ENCODE measurements at regions of chr12 and their contacts with region 1.

Region 1: DNA sequence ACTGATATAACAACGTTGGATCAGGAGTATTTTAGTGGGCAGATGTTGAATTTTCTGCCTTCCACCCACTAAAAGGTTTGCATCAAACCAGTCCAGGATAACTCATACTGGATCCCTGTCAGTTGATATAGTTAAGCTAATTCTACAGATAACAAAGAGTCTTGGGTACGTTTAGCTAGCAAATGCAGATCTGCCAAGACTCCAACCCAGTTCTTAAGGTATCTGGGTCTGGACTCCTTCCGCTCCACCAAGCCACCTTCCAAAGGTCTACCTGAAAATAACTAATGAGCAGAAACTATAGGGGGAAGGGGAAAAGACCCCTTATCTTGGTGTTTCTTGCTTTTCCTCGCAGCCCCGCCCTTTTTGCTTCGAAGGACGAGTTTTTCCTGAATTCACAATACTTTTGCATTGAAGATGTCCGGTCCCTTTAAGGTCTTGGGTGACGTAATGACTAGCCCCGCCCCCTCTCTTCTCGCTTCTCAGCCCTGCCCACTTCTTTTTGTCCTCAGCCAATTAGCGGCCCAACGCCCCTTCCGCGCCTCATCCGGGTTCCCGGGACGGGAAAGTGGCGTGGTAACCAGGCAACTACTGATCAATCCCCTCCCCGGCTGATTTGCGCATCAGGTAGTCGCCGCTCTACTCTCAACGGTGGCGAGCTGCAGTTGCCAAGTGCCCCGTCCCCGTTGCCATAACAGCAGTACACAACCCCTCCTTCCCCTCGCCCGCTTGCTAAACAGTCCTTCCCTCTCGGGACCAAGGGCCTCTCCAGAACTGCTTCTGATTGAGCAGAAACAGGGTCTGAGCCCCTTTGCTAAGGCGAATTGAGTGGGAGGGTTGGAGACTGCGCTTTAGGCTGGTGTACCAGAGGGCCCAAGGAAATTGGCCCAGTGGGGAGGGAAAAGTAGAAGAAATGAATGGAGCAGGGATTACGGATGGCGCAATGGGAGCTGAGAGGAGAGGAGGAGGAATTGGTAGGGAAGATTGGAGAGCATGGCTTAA is at the start of gene LRRC23:
- DNase-seq: peak; percentile 96 to 98 (median 97)
- H3K4me3 ChIP-seq: peak within 1 kb of the TSS; percentile 54 to 87 (median 73)
- H3K27ac ChIP-seq: peak within 1 kb of the TSS; percentile 93 to 97
- H3K4me1 ChIP-seq: peaks cover 17 to 39% (median 35%) of the 10 kb centered on the region in 4 experiments
- H3K27me3 ChIP-seq: no peaks in the 10 kb centered on the region

Region 2: DNA sequence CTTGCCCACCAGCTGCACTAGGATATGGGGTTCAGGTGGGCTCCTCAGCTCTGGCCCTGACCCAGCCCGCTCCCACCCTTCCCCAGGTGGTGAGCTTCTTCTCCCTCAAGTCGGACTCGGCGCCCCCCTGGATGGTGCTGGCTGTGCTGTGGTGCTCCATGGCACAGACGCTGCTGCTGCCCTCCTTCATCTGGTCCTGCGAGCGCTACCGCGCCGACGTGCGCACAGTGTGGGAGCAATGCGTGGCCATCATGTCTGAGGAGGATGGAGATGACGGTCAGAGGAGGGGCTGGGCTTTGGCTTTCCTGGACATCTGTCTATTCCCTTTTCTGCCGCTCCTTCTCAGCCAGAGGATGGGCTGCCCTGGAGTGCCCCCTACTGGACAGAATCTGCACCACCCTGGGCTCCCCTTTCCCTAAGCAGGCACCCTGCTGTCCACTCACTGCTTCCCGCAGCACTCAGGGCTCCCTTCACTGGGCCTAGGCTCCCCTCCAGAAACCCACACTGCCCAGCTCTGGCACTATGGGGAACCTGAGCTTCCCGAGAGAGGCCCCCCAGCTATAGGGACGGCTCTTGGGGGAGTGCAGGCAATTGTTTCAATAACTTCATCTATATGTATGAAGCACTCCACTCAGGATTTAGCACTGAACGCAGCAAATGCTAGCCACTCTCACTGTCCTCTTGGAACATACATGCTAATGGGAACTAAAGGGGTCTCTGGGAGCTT is 79.0 kb before region 1 on chr12:
- CTCF ChIA-PET with region 1: no interaction called
- POLR2A ChIA-PET with region 1: no interaction called
- DNase-seq: peak; percentile 66 to 80 (median 73)
- H3K4me3 ChIP-seq: peak overlapping the region in 1 of 7 experiments; percentile 32
- H3K27ac ChIP-seq: no peak overlapping the region
- H3K4me1 ChIP-seq: peaks cover 0 to 44% (median 39%) of the 10 kb centered on the region in 4 experiments
- H3K27me3 ChIP-seq: peaks cover 0 to 7% (median 0%) of the 10 kb centered on the region in 5 experiments

Region 3: GRCh38 chr12:6890789-6891645 is 13.6 kb before region 1 on chr12:
- CTCF ChIA-PET with region 1: interaction called, 22 read pairs
- POLR2A ChIA-PET with region 1: interaction called, 6 read pairs
- DNase-seq: peak; percentile 96 to 99 (median 98)
- H3K4me3 ChIP-seq: peak overlapping the region; percentile 50 to 87 (median 73)
- H3K27ac ChIP-seq: peak overlapping the region; percentile 81 to 93
- H3K4me1 ChIP-seq: peaks cover 6 to 18% (median 15%) of the 10 kb centered on the region in 4 experiments
- H3K27me3 ChIP-seq: no peaks in the 10 kb centered on the region

Measured in common myeloid progenitor, CD34-positive (primary cell).